Activated T-helper 1 cell treated with anti-CD3 and anti-CD28 coated beads, Interleukin-12 subunit alpha, Interleukin-12 subunit beta, Interleukin-2, Interleukin-4 antibody, amounts not matched to agents 30 ng/mL and 10 ng/mL and 1 ng/mL, durations not matched to agents 14 hours and 24 hours and 36 hours (primary cell): ENCODE measurements at regions of chr11 and their contacts with region 1.

Region 1: GRCh38 chr11:48001438-48002021 is 21.2 kb downstream of the PTPRJ start:
- DNase-seq: peak; percentile 87
- H3K4me3 Mint-ChIP-seq: peak overlapping the region; percentile 72
- H3K27ac Mint-ChIP-seq: peak overlapping the region; percentile 97
- H3K4me1 Mint-ChIP-seq: peaks cover 82% of the 10 kb centered on the region
- H3K27me3 Mint-ChIP-seq: no peaks in the 10 kb centered on the region

Region 2: GRCh38 chr11:47514825-47515647 is 486.5 kb before region 1 on chr11:
- intact Hi-C with region 1: loop called (anchors 10 kb)
- DNase-seq: no peak
- H3K4me3 Mint-ChIP-seq: peak overlapping the region; percentile 60
- H3K27ac Mint-ChIP-seq: peak overlapping the region; percentile 93
- H3K4me1 Mint-ChIP-seq: peaks cover 76% of the 10 kb centered on the region
- H3K27me3 Mint-ChIP-seq: no peaks in the 10 kb centered on the region

Region 3: DNA sequence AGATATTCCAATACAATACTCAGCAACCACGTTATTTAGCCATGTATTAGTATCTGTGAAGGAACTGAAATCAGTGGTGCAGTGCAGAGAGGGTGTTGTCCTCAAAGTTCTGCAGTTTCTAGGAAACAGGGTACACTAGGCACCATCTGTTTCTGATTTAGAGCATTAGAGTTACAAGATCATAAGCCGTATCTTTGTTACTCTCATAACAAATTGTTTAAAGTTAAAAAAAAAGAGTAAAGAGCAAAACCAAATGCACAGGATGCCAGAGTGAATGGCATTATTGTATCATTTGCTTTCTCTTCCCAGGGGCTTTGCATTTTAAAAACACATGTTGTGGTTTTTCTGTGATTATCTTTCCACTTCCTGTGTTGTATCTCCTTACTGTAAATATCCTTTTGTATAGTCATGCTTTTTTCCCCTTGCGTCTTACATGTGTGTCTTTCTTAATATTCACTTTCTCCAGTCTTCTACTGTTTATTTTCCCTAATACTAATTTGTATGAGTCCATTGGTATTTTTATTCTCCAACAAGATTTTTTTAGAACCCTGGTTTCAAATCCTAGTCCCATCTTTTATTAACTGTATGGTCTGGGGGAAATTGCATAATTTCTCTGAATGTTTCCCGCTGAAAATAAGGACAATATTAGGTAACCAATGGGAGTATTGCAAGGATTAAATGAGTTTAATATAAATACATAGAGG is 138.2 kb before region 1 on chr11:
- intact Hi-C with region 1: loop called (anchors 5 kb)
- DNase-seq: no peak
- H3K4me3 Mint-ChIP-seq: peak overlapping the region; percentile 57
- H3K27ac Mint-ChIP-seq: peak overlapping the region; percentile 21
- H3K4me1 Mint-ChIP-seq: peaks cover 33% of the 10 kb centered on the region
- H3K27me3 Mint-ChIP-seq: no peaks in the 10 kb centered on the region

Region 4: GRCh38 chr11:47946682-47947575 is 54.6 kb before region 1 on chr11:
- intact Hi-C with region 1: loop called (anchors 2 kb)
- DNase-seq: peak; percentile 26
- H3K4me3 Mint-ChIP-seq: no peak overlapping the region
- H3K27ac Mint-ChIP-seq: peak overlapping the region; percentile 74
- H3K4me1 Mint-ChIP-seq: peaks cover 57% of the 10 kb centered on the region
- H3K27me3 Mint-ChIP-seq: no peaks in the 10 kb centered on the region

Region 5: DNA sequence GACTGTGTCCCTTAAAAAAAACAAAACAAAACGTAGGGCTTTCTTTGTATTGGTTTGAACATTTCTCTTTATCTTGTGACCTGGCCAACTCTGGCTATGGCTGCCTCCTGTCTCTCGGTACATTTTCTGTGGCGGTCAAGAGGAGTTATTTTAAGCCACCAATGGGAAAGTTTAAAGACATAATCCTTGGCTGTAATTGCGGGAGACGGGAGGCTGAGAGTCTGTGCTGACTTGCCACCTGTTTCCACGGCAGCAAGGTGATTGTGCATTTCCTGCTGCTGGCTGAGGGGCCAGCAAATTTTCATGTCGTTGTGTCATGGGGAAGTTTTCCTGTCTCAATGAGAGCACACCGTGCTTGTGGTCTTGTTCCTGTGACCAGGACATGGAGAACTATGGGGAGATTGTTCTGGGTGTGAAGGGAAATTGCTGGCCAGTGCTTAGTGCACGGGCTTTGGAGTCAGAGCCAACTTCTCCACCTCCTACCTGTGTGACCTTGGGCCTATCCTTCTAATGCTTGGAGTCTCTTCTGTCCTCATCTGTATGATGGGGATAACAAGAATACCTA is 10.2 kb before region 1 on chr11:
- intact Hi-C with region 1: loop called (anchors 1 kb)
- DNase-seq: no peak
- H3K4me3 Mint-ChIP-seq: peak overlapping the region; percentile 48
- H3K27ac Mint-ChIP-seq: peak overlapping the region; percentile 79
- H3K4me1 Mint-ChIP-seq: peaks cover 61% of the 10 kb centered on the region
- H3K27me3 Mint-ChIP-seq: no peaks in the 10 kb centered on the region

Region 6: DNA sequence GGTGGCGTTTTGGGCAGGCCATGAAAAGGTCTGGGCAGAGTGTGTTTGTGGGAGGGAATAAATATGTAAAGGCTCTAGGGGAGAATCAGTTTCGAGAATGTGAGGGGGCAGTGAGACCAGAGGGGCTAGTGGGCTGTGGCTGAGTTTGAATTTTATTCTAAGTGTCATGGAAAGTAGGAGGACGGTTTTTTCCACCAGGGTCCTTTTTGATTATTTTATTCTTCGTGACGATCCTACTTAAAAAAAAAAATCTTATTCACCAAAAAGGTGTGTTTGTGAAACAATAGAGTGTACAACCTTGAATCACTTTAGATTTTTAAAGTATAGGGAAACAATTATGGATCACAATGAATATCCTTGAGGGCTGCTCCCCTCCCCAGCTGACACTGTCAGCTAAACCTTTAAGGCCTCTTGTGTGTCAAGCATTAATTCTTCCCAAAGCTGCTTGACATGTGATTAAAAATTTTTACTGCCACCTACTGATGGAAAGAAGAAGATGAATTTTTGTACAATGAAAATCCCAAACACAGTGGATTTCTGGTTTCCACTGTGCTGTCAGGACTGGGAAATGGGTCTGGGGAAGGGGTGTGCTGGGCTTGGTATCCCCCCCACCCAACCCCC is 107.6 kb after region 1 on chr11:
- intact Hi-C with region 1: loop called (anchors 1 kb)
- DNase-seq: no peak
- H3K4me3 Mint-ChIP-seq: peak overlapping the region; percentile 54
- H3K27ac Mint-ChIP-seq: peak overlapping the region; percentile 88
- H3K4me1 Mint-ChIP-seq: peaks cover 68% of the 10 kb centered on the region
- H3K27me3 Mint-ChIP-seq: no peaks in the 10 kb centered on the region